Dendritic cell treated with granulocyte-macrophage colony-stimulating factor and Interleukin-4, amounts not matched to agents 40 ng/mL and 50 ng/mL, for 4 days (primary cell): ENCODE measurements at regions of chr12 and their contacts with region 1.

Region 1: GRCh38 chr12:11836282-11837151 is 187.0 kb downstream of the ETV6 start:
- H3K4me3 Mint-ChIP-seq: peak overlapping the region; percentile 42
- H3K27ac Mint-ChIP-seq: peak overlapping the region; percentile 99
- H3K4me1 Mint-ChIP-seq: peaks cover 90% of the 10 kb centered on the region
- H3K27me3 Mint-ChIP-seq: no peaks in the 10 kb centered on the region

Region 2: DNA sequence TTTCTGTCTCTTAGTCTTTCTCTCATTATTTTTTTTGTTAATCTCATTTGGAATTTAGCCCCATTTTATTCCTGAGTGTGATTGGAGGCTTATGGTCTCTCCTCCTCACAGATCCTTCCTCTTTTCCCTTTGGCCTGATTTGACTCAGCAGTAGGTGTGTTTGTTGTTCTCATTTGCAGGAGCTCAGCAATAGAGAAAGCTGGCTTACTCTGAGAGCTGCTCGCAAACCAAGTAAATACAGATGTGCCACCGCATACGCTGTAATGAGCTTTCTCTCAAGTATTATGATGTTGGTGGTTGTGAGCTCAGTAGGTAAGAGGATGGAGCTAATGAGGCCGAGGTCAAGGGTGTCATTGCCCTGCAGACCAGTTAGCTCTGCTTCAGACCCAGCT is 19.5 kb after region 1 on chr12:
- intact Hi-C with region 1: no loop called
- H3K4me3 Mint-ChIP-seq: no peak overlapping the region
- H3K27ac Mint-ChIP-seq: peak overlapping the region; percentile 82
- H3K4me1 Mint-ChIP-seq: peaks cover 76% of the 10 kb centered on the region
- H3K27me3 Mint-ChIP-seq: no peaks in the 10 kb centered on the region

Region 3: DNA sequence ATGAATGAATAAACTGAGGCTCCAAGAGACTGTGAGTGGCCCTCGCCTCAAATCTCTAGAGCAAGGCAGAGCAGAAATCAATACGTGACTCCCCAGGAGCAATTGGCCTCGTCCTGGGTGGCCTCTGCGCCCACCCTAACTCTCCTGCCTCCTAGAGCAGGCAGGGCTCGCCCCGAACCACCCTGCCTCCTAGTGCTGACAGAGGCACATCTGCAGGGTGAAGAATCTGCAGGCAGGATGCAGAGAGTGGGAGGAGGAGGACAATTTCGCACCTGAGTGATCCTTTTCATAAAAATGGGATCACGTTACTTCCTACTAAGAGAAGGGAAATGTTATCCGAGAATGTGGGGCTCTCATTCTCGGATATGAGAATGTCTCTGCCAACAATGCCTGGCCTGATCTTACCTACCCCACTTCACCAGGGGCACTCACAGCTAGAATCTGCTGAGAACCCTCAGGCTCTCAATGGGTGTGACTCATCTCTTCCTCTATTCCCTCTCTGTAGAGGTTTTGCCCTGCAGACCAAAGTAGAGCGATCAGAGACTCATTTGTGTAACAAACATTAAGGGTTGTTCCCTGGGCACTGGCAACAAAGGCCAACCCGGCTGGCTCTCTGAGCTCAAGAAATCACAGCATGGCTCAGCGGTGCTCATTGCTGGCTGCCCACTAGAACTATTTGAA is 172.6 kb after region 1 on chr12:
- intact Hi-C with region 1: loop called (anchors 1 kb)
- H3K4me3 Mint-ChIP-seq: peak overlapping the region; percentile 11
- H3K27ac Mint-ChIP-seq: peak overlapping the region; percentile 95
- H3K4me1 Mint-ChIP-seq: peaks cover 53% of the 10 kb centered on the region
- H3K27me3 Mint-ChIP-seq: peaks cover 6% of the 10 kb centered on the region